ENCODE measurements at regions of chr20 and their contacts with region 1.

Region 1: DNA sequence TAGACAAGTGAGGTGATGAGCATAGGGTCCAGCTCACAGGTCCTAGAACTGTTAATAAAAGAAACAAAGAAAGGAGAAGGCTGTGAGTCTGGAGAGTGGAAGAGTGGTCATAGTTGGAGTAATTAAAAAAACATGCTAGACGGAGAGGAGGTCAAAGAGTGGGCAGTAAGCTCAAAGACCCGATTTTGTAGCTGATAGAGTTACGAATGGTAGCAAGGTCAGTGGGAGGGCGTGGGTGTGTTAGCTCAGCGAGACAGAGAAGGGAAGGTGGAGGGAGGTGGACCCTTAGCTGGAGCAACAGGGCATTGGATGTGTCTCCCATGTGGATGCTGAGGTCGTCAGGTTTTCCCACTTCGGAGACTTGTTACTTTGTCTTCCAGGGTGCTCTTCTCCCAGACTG is 431.7 kb downstream of the CDH26 start:
- DNase-seq: no peak
- H3K4me3 ChIP-seq: no peak overlapping the region
- H3K27ac ChIP-seq: no peak overlapping the region
- H3K4me1 ChIP-seq: no peaks in the 10 kb centered on the region
- H3K27me3 ChIP-seq: peaks cover 8% of the 10 kb centered on the region
- CTCF ChIP-seq: no peak

Region 2: DNA sequence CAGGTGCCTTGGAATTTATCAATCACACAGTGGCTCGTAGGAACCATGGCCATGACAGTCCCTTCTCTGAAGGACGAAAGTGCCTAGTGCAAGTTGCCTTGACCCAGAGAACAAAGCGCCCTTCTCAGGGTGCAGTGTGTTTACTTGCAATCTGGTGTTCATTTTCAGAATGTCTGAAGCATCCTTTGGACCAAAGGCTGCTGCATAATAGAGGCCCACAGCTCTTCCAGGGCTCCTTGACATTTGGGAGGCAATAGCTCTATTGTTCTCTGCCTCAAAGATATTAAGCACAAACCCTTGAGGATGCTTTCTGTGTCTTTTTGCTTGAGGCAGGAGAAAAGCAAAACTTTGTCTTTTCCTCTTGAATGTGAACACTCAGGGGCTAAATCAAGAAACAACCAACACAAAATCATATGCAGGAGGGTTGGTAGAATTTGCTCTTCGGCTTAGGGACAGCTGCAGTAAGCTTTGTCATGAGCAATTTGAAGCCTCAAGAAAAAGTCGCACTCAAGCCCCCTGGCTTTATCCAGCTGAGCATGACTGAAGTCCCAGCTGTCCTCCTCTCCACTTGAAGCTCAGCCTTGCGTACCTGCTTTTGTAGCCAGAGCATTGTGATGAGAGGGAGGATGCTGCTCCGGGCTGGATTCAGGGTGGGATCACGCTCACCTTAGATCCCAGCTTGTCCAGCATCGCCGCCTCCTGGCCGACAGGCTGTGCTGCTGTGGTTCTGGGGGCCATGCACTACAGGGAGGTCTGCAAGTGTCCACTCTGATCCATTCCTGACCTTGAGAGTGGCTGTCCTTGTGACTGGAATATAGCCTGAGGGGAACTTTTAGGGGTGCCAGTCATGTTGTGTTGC is 63.7 kb after region 1 on chr20:
- CTCF ChIA-PET with region 1: no interaction called
- dilution Hi-C with region 1: loop called (anchors 5 kb)
- in situ Hi-C with region 1: no loop called
- intact Hi-C with region 1: no loop called
- DNase-seq: no peak
- H3K4me3 ChIP-seq: no peak overlapping the region
- H3K27ac ChIP-seq: no peak overlapping the region
- H3K4me1 ChIP-seq: no peaks in the 10 kb centered on the region
- H3K27me3 ChIP-seq: no peaks in the 10 kb centered on the region
- CTCF ChIP-seq: no peak

Region 3: DNA sequence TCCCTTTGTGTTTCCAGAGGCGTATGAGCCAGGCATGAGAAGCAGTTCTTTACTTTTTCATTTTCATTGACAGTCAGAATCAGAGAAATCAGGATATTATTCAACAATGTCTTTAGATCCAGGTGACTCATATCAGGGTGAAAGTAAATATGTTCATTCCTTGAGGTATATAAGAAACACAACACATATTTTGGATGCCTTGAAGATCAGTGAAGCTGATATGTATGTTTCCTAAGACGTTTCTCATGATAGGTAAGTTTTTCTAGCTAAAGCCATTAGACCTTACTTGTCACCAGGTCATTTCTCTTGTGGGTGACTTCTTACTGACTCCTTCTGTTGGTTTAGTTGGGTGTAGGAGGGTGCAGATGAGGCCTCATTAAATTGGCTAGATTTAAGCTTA is 74.0 kb after region 1 on chr20:
- CTCF ChIA-PET with region 1: no interaction called
- dilution Hi-C with region 1: no loop called
- in situ Hi-C with region 1: no loop called
- intact Hi-C with region 1: no loop called
- DNase-seq: peak; percentile 3
- H3K4me3 ChIP-seq: no peak overlapping the region
- H3K27ac ChIP-seq: no peak overlapping the region
- H3K4me1 ChIP-seq: no peaks in the 10 kb centered on the region
- H3K27me3 ChIP-seq: peaks cover 13% of the 10 kb centered on the region
- CTCF ChIP-seq: no peak

Measured in mammary epithelial cell (primary cell).